ENCODE measurements at regions of chr2 and their contacts with region 1.

Region 1: DNA sequence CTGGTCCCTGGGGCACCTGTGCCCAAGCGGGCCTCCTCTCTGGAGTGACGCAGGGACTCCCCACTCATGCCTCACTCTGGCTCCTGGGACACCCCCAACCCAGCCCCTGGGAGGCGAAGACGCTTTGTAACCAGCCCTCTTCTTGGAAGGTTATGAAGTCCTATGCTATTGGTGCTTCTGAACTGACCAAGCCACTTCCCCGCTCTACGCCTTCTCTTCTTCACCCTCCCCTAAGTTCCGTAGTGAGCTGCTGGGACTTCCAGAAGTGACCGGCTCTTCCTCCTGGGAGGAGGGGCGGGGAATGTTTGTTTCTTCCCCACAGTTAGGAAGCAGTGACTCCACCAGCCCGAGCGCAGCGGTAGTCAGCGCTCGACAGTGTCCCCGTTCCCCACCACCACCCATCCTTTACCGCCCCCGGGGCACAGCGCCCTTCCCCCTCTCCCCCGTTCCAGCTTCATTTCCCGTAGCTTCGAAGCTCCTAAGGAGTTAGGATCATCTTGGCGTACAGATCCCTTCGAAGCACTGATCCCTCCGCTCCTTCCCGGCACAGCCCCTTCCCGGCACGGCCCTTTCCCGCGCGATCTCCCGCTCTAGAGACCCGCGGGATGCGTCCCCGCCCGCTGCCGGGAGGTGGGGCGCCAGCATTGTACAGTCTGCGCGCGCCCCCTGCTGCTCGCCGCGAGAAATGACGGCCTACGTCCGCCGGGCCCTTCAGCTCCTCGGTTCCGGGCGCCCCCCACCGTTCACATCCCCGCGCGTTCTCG is 25.3 kb upstream of the NOTO start:
- DNase-seq: peak; percentile 55
- H3K4me3 ChIP-seq: peak overlapping the region; percentile 71
- H3K27ac ChIP-seq: no peak overlapping the region
- H3K27me3 ChIP-seq: peaks cover 17% of the 10 kb centered on the region
- CTCF ChIP-seq: peak; percentile 91

Region 2: DNA sequence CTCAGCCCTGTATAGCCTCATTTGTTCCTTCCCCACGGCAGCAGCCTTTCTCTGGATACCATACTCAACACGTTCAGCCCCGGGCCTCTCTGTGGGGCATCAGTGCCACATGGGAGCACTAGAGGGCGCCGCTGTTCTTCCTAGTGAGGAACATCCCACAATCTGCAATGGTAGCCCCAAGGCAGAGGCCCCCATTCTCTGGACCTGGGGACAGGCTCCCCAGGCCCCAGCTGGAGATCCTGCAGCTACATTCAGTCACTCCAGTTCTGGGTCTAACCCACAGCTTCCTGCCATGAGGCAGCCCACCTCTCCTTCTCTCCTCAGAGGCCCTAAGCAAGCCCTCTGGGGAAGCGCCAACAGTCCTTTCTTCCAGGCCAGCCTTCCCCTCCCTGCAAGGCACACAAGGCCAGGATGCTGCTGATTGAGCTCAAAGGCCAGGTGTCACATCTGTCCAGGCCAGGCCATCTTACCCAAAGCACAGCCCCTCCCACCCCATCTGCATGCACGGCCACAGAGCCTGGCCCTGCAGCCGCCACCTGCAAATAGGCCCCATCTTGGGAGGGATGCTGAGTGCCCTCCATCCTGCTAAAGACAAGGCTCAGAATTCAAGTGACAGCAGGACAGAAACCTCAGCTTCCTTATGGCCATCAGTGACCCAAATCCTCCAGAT is 91.2 kb before region 1 on chr2:
- CTCF ChIA-PET with region 1: interaction called, 34 read pairs
- POLR2A ChIA-PET with region 1: interaction called, 6 read pairs
- DNase-seq: peak; percentile 33
- H3K4me3 ChIP-seq: 0 out of 2 replicates have a peak overlapping the region, but pooled peaks have one; percentile 15
- H3K27ac ChIP-seq: no peak overlapping the region
- H3K27me3 ChIP-seq: no peaks in the 10 kb centered on the region
- CTCF ChIP-seq: peak; percentile 98

Region 3: DNA sequence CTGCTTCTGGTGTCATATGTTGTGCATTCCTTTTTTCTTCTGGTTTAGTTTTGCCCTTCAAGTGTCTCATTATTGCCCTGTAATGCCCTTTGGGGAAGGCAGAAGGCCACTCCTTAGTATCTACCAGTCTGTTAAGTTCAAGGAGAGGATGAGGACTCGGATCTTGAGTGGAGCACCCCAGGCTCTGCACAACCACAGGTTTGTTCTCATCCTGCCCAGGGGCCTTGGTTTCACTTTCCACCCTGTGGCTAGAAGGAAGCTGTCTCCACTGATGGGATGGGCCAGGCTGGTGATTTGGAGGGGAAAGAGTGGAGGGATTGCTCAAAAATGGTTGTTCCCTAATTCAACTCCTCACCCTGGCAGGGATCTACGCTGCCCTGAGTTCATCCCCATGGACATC is 34.1 kb before region 1 on chr2:
- CTCF ChIA-PET with region 1: interaction called, 11 read pairs
- POLR2A ChIA-PET with region 1: no interaction called
- DNase-seq: no peak
- H3K4me3 ChIP-seq: no peak overlapping the region
- H3K27ac ChIP-seq: no peak overlapping the region
- H3K27me3 ChIP-seq: peaks cover 18% of the 10 kb centered on the region
- CTCF ChIP-seq: no peak

Region 4: DNA sequence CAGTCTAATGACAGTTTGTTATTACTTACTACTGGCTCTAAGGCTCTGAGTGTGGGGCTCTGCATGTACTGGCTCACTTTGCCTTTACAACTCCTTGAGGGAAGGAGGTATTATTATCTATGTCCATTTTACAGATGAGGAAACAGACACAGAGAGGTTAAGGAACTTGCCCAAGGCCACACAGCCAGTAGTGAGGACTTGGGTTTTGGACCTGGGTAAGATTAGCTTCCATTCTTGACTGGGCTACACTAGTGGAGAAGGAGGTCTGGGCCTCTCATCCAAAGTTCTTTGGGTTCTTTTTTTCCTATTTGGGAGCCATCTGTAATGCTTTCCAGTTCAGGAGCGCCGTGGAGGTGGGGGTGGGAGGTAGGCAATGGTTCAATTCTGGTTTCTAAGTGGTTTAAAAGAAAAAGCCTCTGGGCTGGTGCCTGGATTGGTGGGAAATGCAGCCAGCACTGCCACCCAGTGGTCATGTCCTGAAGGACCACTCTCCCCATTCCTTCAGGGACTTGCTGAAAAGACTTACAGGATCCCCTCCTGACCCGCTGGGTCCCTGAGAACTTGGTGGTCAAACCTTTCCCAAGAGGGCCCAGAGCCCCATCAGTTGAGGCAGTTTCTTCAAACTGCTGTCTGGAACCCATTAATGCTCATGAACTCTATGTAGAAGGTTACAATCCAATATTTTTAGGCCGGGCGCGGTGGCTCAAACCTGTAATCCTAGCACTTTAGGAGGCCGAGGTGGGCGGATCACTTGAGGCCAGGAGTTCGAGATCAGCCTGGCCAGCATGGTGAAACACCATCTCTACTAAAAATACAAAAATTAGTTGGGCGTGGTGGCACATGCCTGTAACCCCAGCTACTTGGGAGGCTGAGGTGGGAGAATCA is 13.3 kb before region 1 on chr2:
- CTCF ChIA-PET with region 1: interaction called, 25 read pairs
- POLR2A ChIA-PET with region 1: no interaction called
- DNase-seq: peak; percentile 62
- H3K4me3 ChIP-seq: no peak overlapping the region
- H3K27ac ChIP-seq: no peak overlapping the region
- H3K27me3 ChIP-seq: peaks cover 5% of the 10 kb centered on the region
- CTCF ChIP-seq: peak; percentile 94

Region 5: GRCh38 chr2:73202156-73203054 is 25.3 kb after region 1 on chr2 and contains the start of gene NOTO:
- CTCF ChIA-PET with region 1: interaction called, 13 read pairs
- POLR2A ChIA-PET with region 1: no interaction called
- DNase-seq: no peak
- H3K4me3 ChIP-seq: 0 out of 2 replicates have a peak within 1 kb of the TSS, but pooled peaks have one; percentile 7
- H3K27ac ChIP-seq: no peak within 1 kb of the TSS
- H3K27me3 ChIP-seq: peaks cover 49% of the 10 kb centered on the region
- CTCF ChIP-seq: no peak
- polyA plus RNA-seq, gene NOTO: not detected in 2 replicates

Region 6: DNA sequence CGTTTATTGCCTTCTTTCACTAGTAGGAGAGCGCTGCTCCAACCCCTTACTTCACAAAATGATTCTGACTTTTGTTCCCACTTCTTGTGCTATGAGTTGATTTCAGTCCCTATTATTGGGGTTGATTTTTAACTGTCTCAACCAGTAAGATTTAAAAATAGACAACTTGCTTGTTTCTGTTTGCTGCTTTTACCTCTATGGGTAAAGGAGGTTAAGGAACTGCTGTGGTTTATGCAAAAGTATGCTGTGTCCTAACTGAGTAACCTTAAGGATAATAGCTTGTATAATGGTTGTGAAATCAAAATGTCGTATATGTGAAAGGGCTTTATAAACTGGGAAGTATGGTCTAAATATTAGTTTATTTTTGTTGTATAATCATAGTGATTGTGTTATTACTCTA is 231.1 kb after region 1 on chr2:
- CTCF ChIA-PET with region 1: no interaction called
- POLR2A ChIA-PET with region 1: no interaction called
- DNase-seq: no peak
- H3K4me3 ChIP-seq: no peak overlapping the region
- H3K27ac ChIP-seq: no peak overlapping the region
- H3K27me3 ChIP-seq: no peaks in the 10 kb centered on the region
- CTCF ChIP-seq: no peak

Region 7: DNA sequence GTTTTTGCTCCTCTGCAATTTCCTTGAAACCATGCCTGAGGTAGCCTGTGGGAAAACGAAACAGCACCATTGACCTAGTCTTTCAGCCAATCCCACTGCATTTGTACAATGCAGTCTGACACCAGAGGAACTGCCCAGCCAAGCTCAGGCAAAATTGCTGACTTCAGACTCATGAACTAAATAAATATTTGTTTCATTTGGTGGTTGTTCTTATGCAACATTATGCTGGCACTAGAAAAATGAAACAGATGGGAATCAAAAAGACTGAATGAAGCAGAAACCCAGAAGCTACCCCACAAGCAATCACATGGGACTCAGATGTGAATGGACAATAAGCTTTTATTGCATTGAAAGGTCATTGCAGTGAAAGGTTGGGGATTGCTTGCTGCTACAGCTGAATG is 463.4 kb after region 1 on chr2:
- CTCF ChIA-PET with region 1: no interaction called
- POLR2A ChIA-PET with region 1: no interaction called
- DNase-seq: no peak
- H3K4me3 ChIP-seq: no peak overlapping the region
- H3K27ac ChIP-seq: no peak overlapping the region
- H3K27me3 ChIP-seq: peaks cover 6% of the 10 kb centered on the region
- CTCF ChIP-seq: no peak